Activated CD8-positive, alpha-beta T cell treated with anti-CD3 and anti-CD28 coated beads for 36 hours (primary cell): ENCODE measurements at regions of chr1 and their contacts with region 1.

Region 1: DNA sequence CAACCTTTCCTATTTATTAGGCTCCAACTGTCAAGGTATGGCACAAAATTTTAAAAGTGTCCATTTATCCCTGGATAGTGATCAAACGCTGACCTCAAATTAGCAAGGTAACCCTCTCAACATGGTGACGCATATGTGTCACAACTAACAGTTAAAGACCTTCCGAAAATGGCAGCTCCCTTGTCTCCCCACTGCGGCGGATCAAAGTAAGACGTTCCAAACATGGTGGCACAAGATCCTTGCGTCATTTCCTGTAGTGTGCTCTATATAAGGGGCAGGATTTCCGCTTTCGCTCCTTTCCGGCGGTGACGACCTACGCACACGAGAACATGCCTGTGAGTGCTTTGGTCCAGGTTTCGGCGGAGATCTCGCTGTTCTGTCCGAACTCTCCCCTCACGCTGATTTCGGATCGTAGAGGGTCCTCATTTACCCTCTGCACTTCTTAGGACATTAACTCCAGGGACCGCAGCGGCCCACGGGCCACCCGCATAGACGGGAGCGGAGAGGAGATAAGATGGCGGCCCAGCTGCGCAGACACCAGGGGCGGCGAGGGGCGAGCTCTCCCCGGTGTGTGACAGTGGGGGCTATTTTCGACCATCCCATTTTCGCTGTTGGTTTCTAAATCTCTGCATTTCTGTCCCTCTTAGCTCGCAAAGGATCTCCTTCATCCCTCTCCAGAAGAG is at the start of gene RPS27:
- DNase-seq: peak; percentile 93
- ATAC-seq: peak; percentile 85
- H3K4me3 Mint-ChIP-seq: peak within 1 kb of the TSS; percentile 95
- H3K27ac Mint-ChIP-seq: peak within 1 kb of the TSS; percentile 98
- H3K4me1 Mint-ChIP-seq: peaks cover 28% of the 10 kb centered on the region
- H3K27me3 Mint-ChIP-seq: no peaks in the 10 kb centered on the region
- CTCF ChIP-seq: no peak
- total RNA-seq, gene RPS27: 1,638 to 1,644 TPM

Region 2: DNA sequence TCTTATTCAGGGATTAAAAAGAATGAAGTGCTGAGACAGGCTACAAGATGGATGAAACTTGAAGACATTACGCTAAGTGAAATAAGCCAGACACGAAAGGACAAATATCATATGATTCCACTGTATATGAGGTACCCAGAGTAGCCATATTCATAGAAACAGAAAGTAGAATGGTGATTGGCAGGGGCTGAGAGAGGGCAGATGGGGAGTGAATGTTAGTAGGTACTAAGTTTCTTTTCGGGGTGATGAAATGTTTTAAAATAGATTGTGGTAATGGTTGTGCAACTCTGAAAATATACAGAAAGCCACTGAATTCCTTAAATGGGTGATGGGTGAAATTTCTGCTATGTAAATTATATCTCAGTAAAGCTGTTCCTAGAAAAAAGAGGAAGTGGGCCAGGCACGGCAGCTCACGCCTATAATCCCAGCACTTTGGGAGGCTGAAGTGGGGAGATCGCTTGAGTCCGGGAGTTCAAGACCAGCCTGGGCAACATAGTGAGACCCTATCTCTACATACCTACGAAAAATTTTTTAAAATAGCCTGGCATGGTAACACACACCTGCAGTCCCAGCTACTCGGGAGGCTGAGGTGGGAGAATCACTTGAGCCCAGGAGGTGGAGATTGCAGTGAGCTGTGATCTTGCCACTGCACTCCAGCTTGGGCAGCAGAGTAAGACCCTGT is 199.5 kb before region 1 on chr1:
- CTCF ChIA-PET with region 1: interaction called, 37 read pairs
- POLR2A ChIA-PET with region 1: interaction called, 10 read pairs
- intact Hi-C with region 1: no loop called
- DNase-seq: peak; percentile 62
- ATAC-seq: peak; percentile 91
- H3K4me3 Mint-ChIP-seq: peak overlapping the region; percentile 43
- H3K27ac Mint-ChIP-seq: peak overlapping the region; percentile 80
- H3K4me1 Mint-ChIP-seq: peaks cover 33% of the 10 kb centered on the region
- H3K27me3 Mint-ChIP-seq: peaks cover 2% of the 10 kb centered on the region
- CTCF ChIP-seq: no peak

Region 3: GRCh38 chr1:153816283-153816889 is 174.2 kb before region 1 on chr1:
- CTCF ChIA-PET with region 1: interaction called, 22 read pairs
- POLR2A ChIA-PET with region 1: interaction called, 4 read pairs
- intact Hi-C with region 1: no loop called
- DNase-seq: no peak
- ATAC-seq: no peak
- H3K4me3 Mint-ChIP-seq: no peak overlapping the region
- H3K27ac Mint-ChIP-seq: no peak overlapping the region
- H3K4me1 Mint-ChIP-seq: no peaks in the 10 kb centered on the region
- H3K27me3 Mint-ChIP-seq: no peaks in the 10 kb centered on the region
- CTCF ChIP-seq: no peak

Region 4: DNA sequence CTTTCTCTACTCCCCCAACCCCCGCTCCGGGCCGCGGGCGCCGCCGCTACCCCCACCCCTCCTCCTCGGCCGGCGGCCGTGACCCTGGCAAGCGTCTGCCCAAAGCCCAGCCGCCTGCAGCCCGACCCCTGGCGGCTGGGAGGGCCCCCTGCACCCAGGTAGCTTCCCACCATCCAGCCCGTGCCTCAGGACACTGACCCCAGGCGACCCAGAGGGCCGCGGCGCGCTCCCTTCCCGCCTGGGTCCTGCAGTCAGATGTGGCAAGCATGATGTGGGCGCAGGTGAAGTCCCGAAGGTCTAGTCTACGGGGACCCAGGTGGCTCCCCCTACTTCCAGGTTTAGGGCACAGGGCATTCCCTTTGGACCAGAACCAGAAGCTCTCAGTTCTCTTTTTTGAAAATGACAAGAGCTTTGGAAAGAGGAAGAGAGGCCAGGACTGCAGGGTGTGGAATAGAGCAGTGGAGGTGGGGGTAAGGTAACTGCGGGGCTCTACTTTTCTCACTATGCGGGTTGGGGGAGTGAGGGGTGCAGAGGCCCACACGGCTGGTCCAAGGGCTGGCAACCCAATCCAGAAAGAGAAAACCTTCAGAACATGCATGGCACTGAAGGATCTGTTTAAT is 43.9 kb before region 1 on chr1 and contains the start of gene DENND4B:
- CTCF ChIA-PET with region 1: interaction called, 59 read pairs
- POLR2A ChIA-PET with region 1: interaction called, 13 read pairs
- intact Hi-C with region 1: no loop called
- DNase-seq: peak; percentile 78
- ATAC-seq: peak; percentile 73
- H3K4me3 Mint-ChIP-seq: peak within 1 kb of the TSS; percentile 88
- H3K27ac Mint-ChIP-seq: peak within 1 kb of the TSS; percentile 99
- H3K4me1 Mint-ChIP-seq: peaks cover 26% of the 10 kb centered on the region
- H3K27me3 Mint-ChIP-seq: no peaks in the 10 kb centered on the region
- CTCF ChIP-seq: peak; percentile 99
- total RNA-seq, gene DENND4B: 102 to 107 TPM

Region 5: GRCh38 chr1:153977250-153978240 is 13.1 kb before region 1 on chr1 and contains the start of gene JTB:
- CTCF ChIA-PET with region 1: interaction called, 73 read pairs
- POLR2A ChIA-PET with region 1: interaction called, 237 read pairs
- intact Hi-C with region 1: no loop called
- DNase-seq: peak; percentile 94
- ATAC-seq: peak; percentile 96
- H3K4me3 Mint-ChIP-seq: peak within 1 kb of the TSS; percentile 99
- H3K27ac Mint-ChIP-seq: peak within 1 kb of the TSS; percentile 98
- H3K4me1 Mint-ChIP-seq: peaks cover 28% of the 10 kb centered on the region
- H3K27me3 Mint-ChIP-seq: no peaks in the 10 kb centered on the region
- CTCF ChIP-seq: no peak
- total RNA-seq, gene JTB: 151 to 153 TPM

Region 6: GRCh38 chr1:154263465-154264332 is 273.1 kb after region 1 on chr1:
- CTCF ChIA-PET with region 1: no interaction called
- POLR2A ChIA-PET with region 1: no interaction called
- intact Hi-C with region 1: loop called (anchors 10 kb)
- DNase-seq: peak; percentile 12
- ATAC-seq: no peak
- H3K4me3 Mint-ChIP-seq: no peak overlapping the region
- H3K27ac Mint-ChIP-seq: peak overlapping the region; percentile 78
- H3K4me1 Mint-ChIP-seq: peaks cover 52% of the 10 kb centered on the region
- H3K27me3 Mint-ChIP-seq: no peaks in the 10 kb centered on the region
- CTCF ChIP-seq: no peak